ENCODE measurements at regions of chr13 and their contacts with region 1.

Region 1: GRCh38 chr13:23579072-23579895 is 9.1 kb downstream of the TNFRSF19 start:
- DNase-seq: peak; percentile 87
- H3K4me3 Mint-ChIP-seq: peak overlapping the region; percentile 79
- H3K27ac Mint-ChIP-seq: no peak overlapping the region
- H3K4me1 Mint-ChIP-seq: peaks cover 24% of the 10 kb centered on the region
- H3K27me3 Mint-ChIP-seq: peaks cover 59% of the 10 kb centered on the region

Region 2: GRCh38 chr13:23466144-23467002 is 112.9 kb before region 1 on chr13:
- intact Hi-C with region 1: loop called (anchors 2 kb)
- DNase-seq: peak; percentile 40
- H3K4me3 Mint-ChIP-seq: peak overlapping the region; percentile 68
- H3K27ac Mint-ChIP-seq: peak overlapping the region; percentile 21
- H3K4me1 Mint-ChIP-seq: peaks cover 5% of the 10 kb centered on the region
- H3K27me3 Mint-ChIP-seq: peaks cover 22% of the 10 kb centered on the region

Region 3: DNA sequence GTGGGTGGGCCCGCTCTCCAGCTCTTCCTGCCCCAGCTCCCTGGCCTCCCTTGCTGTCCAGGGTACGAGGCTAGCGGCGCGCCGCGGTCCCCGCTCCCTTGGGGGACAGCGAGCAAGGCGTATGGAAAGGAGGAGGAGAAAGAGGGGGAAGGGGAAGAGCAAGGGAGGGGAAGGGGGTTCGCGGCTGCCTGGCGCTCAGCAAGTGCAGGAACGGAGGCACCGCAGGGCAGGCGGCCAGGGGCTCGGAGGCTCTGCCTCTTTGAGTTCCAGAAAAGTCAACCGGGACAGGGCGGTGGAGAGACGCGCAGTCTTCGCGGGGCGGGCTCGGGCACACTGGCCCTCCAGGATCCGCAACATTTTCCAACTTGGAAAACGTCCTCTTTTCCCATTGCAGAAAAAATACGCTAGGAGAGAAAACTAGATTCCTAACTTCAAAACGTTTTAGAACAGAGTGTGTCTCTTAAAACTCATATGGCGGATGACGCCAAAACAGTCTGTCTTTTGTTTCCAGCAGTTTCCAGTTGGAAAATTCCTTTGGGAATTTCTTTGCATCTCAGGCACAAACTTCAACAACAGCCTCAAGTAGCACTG is 32.2 kb before region 1 on chr13:
- intact Hi-C with region 1: no loop called
- DNase-seq: no peak
- H3K4me3 Mint-ChIP-seq: no peak overlapping the region
- H3K27ac Mint-ChIP-seq: no peak overlapping the region
- H3K4me1 Mint-ChIP-seq: no peaks in the 10 kb centered on the region
- H3K27me3 Mint-ChIP-seq: peaks cover 15% of the 10 kb centered on the region

Region 4: DNA sequence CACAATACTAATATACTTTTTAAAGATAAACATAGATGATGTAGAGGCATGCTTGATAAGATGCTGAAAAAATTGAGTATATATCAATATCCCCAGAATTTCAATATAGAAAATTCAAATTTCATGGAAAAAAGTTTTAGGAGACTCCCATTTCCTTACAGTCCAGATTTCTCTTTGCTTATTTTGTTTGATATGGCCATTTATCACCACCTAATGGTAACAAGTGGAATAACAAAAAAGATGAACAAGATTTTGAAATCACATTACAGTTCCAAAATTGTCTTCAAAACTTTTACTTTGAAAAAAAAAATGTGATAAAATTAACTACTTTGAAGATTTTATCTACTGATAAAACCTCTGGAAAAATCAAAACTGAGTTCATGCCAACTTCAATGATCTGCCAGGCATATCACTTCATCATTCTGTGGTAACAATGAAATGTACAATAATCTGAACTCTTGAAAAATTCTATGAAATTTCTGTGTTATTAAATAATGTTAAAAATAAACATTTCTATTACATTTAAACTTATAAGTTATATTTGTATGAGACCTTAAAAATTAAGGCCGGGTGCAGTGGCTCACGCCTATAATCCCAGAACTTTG is 292.4 kb after region 1 on chr13:
- intact Hi-C with region 1: loop called (anchors 5 kb)
- DNase-seq: no peak
- H3K4me3 Mint-ChIP-seq: no peak overlapping the region
- H3K27ac Mint-ChIP-seq: no peak overlapping the region
- H3K4me1 Mint-ChIP-seq: no peaks in the 10 kb centered on the region
- H3K27me3 Mint-ChIP-seq: no peaks in the 10 kb centered on the region

Region 5: GRCh38 chr13:24160454-24161009 is 581.2 kb after region 1 on chr13 and contains the start of gene SPATA13:
- intact Hi-C with region 1: loop called (anchors 5 kb)
- DNase-seq: peak; percentile 86
- H3K4me3 Mint-ChIP-seq: peak within 1 kb of the TSS; percentile 92
- H3K27ac Mint-ChIP-seq: peak within 1 kb of the TSS; percentile 76
- H3K4me1 Mint-ChIP-seq: peaks cover 26% of the 10 kb centered on the region
- H3K27me3 Mint-ChIP-seq: peaks cover 7% of the 10 kb centered on the region
- total RNA-seq, gene SPATA13: 56.2 and 56.3 TPM in 2 replicates

Region 6: GRCh38 chr13:25301347-25302047 is 1722.2 kb after region 1 on chr13 and contains the start of gene NUP58:
- intact Hi-C with region 1: loop called (anchors 5 kb)
- DNase-seq: peak; percentile 94
- H3K4me3 Mint-ChIP-seq: peak within 1 kb of the TSS; percentile 96
- H3K27ac Mint-ChIP-seq: peak within 1 kb of the TSS; percentile 94
- H3K4me1 Mint-ChIP-seq: peaks cover 35% of the 10 kb centered on the region
- H3K27me3 Mint-ChIP-seq: peaks cover 5% of the 10 kb centered on the region
- total RNA-seq, gene NUP58: 131 and 142 TPM in 2 replicates